ENCODE measurements at regions of chr3 and their contacts with region 1.

Region 1: GRCh38 chr3:52455283-52456168 is at the start of gene NISCH:
- DNase-seq: peak; percentile 88 to 94
- H3K4me3 ChIP-seq: peak within 1 kb of the TSS; percentile 79 to 83
- H3K27ac ChIP-seq: peak within 1 kb of the TSS; percentile 91 to 92
- H3K4me1 ChIP-seq: peaks cover 0 to 33% (median 27%) of the 10 kb centered on the region in 4 donors
- H3K27me3 ChIP-seq: no peaks in the 10 kb centered on the region
- CTCF ChIP-seq: no peak

Region 2: GRCh38 chr3:52685709-52686691 is 230.5 kb after region 1 on chr3 and contains the starts of genes GNL3 and PBRM1:
- intact Hi-C with region 1: loop called (anchors 10 kb)
- DNase-seq: peak; percentile 92 to 97
- H3K4me3 ChIP-seq: peak within 1 kb of the TSS; percentile 71 to 74
- H3K27ac ChIP-seq: peak within 1 kb of the TSS; percentile 90 to 99
- H3K4me1 ChIP-seq: peaks cover 0 to 53% (median 32%) of the 10 kb centered on the region in 4 donors
- H3K27me3 ChIP-seq: no peaks in the 10 kb centered on the region
- CTCF ChIP-seq: no peak

Measured in tibial artery (tissue), 4 donors.